ENCODE measurements at regions of chr11 and their contacts with region 1.

Region 1: GRCh38 chr11:15199693-15200092 is 85.0 kb downstream of the INSC start:
- DNase-seq: no peak
- H3K4me3 ChIP-seq: no peak overlapping the region
- H3K27ac ChIP-seq: no peak overlapping the region
- H3K27me3 ChIP-seq: peaks cover 0 to 14% (median 0%) of the 10 kb centered on the region in 45 donors
- CTCF ChIP-seq: no peak

Region 2: GRCh38 chr11:15123849-15124248 is 75.8 kb before region 1 on chr11:
- intact Hi-C with region 1: loop called in 1 of 2 experiments (anchors 5 kb)
- DNase-seq: peak in 1 of 10 donors; percentile 78
- H3K4me3 ChIP-seq: no peak overlapping the region
- H3K27ac ChIP-seq: no peak overlapping the region
- H3K27me3 ChIP-seq: peaks cover 0 to 20% (median 0%) of the 10 kb centered on the region in 45 donors
- CTCF ChIP-seq: no peak

Region 3: DNA sequence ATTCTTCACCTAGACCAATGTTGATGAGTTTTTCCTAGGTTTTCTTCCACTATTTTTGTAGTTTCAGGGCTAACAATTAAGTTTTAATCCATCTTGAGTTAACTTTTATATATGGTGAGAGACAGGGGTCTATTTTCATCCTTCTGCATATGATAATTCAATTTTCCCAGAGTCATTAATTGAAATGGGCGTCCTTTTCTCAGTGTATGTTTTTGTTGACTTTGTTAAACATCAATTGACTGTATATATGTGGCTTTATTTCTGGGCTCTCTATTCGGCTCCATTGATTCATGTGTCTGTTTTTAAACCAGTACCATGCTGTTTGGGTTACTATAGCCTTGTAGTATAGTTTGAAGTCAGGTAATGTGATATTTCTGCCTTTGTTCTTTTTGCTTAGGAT is 197.1 kb after region 1 on chr11:
- intact Hi-C with region 1: no loop called
- DNase-seq: no peak
- H3K4me3 ChIP-seq: no peak overlapping the region
- H3K27ac ChIP-seq: no peak overlapping the region
- H3K27me3 ChIP-seq: no peaks in the 10 kb centered on the region
- CTCF ChIP-seq: no peak